Right ventricle myocardium inferior (tissue), 1 donor: ENCODE measurements at regions of chr10 and their contacts with region 1.

Region 1: GRCh38 chr10:689433-690371 is at the start of gene DIP2C:
- DNase-seq: peak; percentile 86
- ATAC-seq: peak; percentile 89
- total RNA-seq, gene DIP2C: 28.3 TPM

Region 2: GRCh38 chr10:511101-511848 is 178.4 kb before region 1 on chr10:
- intact Hi-C with region 1: loop called (anchors 2 kb)
- DNase-seq: peak; percentile 95
- ATAC-seq: peak; percentile 93

Region 3: DNA sequence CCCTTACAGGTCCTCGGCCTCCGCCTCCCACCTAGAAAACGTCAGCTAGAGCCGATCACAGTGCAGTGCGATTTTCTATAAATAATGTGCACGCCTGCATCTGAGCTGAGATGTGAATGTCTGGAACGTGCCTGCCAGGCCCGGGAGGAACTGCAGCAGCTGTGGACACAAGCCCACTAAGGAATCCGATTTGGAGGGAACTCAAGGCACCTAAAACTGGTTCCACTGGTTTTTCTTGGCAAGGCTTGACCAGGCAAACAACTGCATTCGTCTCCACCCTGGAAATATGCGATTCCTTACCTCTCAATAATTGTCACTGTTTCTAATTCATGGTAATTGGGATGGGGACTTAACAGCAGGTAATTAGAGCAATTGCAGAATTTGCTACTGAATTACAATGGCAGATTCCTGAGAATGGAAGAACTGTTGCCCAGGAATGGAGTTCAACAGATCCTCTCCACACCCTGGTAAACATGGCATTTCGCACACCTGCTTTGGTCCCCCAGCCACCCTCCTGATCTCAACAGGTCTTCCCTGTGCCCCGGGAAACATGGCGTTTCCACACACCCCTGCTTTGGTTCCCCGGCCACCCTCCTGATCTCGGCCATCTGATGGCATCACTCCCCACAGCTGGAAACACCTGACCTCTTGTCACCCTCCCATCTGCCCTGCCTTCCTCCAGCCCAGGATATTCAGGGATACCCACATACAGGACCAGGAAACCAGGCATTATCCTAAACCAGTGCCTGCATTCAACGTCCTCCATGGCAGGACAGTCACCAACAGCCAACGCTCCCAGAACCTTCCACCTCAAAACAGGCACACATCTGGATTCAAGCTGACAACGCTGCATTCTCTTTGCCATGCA is 76.2 kb before region 1 on chr10:
- intact Hi-C with region 1: loop called (anchors 5 kb)
- DNase-seq: no peak
- ATAC-seq: peak; percentile 72

Region 4: GRCh38 chr10:633279-634245 is 56.1 kb before region 1 on chr10:
- intact Hi-C with region 1: loop called (anchors 2 kb)
- DNase-seq: peak; percentile 56
- ATAC-seq: peak; percentile 29

Region 5: DNA sequence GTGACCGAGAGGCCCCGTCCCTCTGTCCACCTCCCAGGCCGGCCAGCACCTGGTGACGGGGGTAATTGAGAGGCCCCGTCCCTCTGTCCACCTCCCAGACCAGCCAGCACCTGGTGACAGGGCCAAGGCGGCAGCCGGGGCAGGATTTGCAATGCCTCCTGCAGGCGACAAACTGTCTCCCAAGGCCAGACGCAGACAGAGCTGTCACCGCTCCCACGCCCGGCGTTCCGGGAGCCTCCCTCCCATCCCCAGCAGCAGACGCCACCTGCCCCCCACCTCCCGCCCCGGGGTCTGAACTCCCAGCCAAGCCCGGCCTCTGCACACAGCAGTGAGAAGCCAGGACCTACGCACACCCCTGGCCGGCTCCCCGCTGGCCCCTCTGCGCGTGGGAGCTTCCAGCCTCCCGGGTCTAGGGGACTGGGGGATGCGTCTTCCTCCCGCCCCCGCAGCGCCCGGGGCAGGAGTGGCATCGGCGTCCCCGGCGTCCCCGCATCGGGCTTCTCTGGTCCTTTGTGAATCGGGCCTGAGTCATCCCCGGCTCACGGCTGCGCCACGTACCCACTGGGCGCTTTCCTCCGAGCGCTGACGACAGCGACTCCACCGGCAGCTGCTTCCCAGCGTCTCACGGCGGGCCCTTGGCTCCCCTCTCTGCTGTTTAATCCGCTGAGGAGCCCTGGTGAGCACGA is 94.8 kb after region 1 on chr10:
- intact Hi-C with region 1: loop called (anchors 5 kb)
- DNase-seq: peak; percentile 73
- ATAC-seq: peak; percentile 50

Region 6: DNA sequence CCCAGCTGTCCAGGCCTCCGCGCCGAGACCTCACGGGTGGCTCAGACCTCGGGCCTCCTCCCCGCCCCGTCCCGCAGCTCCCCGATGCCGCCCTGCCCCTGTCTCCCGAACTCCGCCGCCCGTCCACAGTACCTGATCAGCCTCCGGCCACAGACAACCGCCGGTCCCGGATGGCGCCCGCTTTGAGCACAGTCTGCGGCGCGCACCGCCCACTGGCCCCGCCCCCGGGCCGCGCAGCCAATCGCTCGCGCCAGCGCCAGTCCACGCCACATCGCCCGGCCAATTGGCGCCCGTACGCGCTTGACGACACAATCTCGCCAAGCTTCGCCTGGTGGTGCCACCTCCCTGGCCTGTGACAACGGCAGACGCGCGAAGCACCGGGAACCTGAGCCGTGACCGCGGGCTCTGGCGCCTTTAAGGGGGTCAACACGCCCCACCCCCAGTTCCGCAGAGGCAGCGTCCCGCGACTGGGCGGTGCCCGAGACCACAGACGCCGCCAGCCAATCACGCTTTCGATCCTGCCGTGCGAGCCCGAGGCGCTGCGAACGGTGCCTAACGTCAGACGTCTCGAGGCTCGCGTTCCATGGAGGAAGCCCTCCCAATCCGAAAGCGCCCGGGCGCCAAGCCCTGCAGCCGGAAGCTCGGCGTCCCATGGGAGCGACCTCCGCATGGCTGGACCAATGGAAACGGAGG is 359.2 kb after region 1 on chr10 and contains the start of gene IDI1:
- intact Hi-C with region 1: loop called (anchors 5 kb)
- DNase-seq: peak; percentile 99
- ATAC-seq: peak; percentile 97
- total RNA-seq, gene IDI1: 14.6 TPM